Activated CD4-positive, alpha-beta memory T cell treated with anti-CD3 and anti-CD28 coated beads for 36 hours (primary cell): ENCODE measurements at regions of chr22 and their contacts with region 1.

Region 1: DNA sequence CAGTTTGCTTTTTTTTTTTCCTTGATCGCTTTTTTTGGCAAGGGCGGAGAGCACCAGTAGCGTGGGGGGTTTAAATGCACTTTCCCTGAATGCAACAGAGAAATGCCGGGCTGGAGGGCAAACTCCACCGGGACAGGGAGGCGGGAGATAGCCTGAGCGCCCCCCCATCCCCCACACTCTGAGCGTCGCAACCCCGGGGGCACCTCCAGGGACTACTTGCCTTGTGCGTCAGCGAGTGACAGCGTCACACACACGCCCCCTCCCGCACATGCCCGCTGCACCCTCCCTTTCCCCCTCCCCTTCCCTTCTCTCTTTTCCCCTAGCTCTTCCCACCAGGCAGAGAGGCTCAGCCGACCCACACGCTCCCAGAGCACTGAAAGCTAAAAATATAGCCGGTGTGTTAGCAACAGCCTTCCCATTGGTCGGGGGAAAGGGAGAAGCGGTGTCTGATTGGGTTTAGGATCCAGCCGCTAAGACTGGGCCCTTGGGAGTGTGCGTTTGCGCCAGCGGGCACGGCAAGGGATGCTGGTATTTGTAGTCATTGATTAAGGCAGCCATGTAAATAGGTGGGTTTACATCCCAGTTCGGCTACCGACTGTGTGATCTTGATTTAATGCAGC is 1.7 kb upstream of the TOB2 start:
- DNase-seq: peak; percentile 95
- H3K4me3 Mint-ChIP-seq: peak overlapping the region; percentile 94
- H3K27ac Mint-ChIP-seq: peak overlapping the region; percentile 98
- H3K4me1 Mint-ChIP-seq: peaks cover 17% of the 10 kb centered on the region
- H3K27me3 Mint-ChIP-seq: no peaks in the 10 kb centered on the region

Region 2: GRCh38 chr22:40950962-40951794 is 497.1 kb before region 1 on chr22 and contains the start of gene RBX1:
- CTCF ChIA-PET with region 1: no interaction called
- POLR2A ChIA-PET with region 1: no interaction called
- intact Hi-C with region 1: loop called (anchors 1 kb)
- DNase-seq: peak; percentile 99
- H3K4me3 Mint-ChIP-seq: peak within 1 kb of the TSS; percentile 99
- H3K27ac Mint-ChIP-seq: peak within 1 kb of the TSS; percentile 99
- H3K4me1 Mint-ChIP-seq: peaks cover 30% of the 10 kb centered on the region
- H3K27me3 Mint-ChIP-seq: no peaks in the 10 kb centered on the region
- total RNA-seq, gene RBX1: 96.9 to 99.4 TPM

Region 3: GRCh38 chr22:41285820-41286638 is 162.3 kb before region 1 on chr22 and contains the start of gene RANGAP1:
- CTCF ChIA-PET with region 1: no interaction called
- POLR2A ChIA-PET with region 1: interaction called, 11 read pairs
- intact Hi-C with region 1: loop called (anchors 1 kb)
- DNase-seq: peak; percentile 99
- H3K4me3 Mint-ChIP-seq: peak within 1 kb of the TSS; percentile 98
- H3K27ac Mint-ChIP-seq: peak within 1 kb of the TSS; percentile 99
- H3K4me1 Mint-ChIP-seq: peaks cover 25% of the 10 kb centered on the region
- H3K27me3 Mint-ChIP-seq: no peaks in the 10 kb centered on the region
- total RNA-seq, gene RANGAP1: 154 to 156 TPM

Region 4: DNA sequence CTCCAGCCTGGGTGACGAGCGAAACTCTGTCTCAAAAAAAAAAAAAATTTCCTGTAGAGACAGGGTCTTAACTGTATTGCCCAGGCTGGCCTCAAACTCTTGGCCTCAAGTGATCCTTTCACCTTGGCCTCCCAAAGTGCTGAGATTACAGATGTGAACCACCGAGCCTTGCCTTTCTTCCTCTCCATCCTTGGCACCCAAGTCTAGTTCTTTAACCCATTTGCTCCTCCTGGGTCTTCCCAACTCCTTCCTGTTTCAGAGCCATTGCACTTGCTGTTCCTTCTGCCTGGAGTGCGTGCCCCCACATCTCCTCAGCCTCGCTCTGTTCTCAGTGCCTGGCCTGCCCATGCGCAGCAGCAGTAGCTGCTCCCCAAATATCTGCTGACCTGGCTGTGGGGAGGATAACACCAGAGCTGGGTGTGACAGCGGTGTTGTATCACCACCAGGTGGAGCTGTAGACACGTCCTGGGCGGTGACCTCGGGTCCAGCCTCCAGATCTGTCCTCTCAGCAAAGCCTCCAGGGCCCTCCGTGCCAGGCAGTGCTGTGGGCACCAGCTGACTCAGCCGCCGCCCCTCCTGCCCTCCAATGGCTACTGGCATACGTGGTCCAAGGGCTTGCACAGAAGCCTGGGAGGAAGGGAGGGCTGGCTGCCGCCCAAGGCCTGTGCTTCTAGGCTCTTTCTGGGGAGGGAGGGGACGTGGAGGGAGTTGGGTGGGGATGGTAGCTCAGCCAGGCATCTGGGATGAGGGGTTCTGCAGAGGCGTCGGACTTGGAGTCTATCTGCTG is 44.6 kb before region 1 on chr22:
- CTCF ChIA-PET with region 1: interaction called, 18 read pairs
- POLR2A ChIA-PET with region 1: interaction called, 7 read pairs
- intact Hi-C with region 1: loop called (anchors 2 kb)
- DNase-seq: peak; percentile 92
- H3K4me3 Mint-ChIP-seq: no peak overlapping the region
- H3K27ac Mint-ChIP-seq: no peak overlapping the region
- H3K4me1 Mint-ChIP-seq: peaks cover 17% of the 10 kb centered on the region
- H3K27me3 Mint-ChIP-seq: no peaks in the 10 kb centered on the region

Region 5: GRCh38 chr22:41461901-41462300 is 13.6 kb after region 1 on chr22:
- CTCF ChIA-PET with region 1: no interaction called
- POLR2A ChIA-PET with region 1: interaction called, 14 read pairs
- intact Hi-C with region 1: no loop called
- DNase-seq: no peak
- H3K4me3 Mint-ChIP-seq: no peak overlapping the region
- H3K27ac Mint-ChIP-seq: no peak overlapping the region
- H3K4me1 Mint-ChIP-seq: peaks cover 8% of the 10 kb centered on the region
- H3K27me3 Mint-ChIP-seq: no peaks in the 10 kb centered on the region

Region 6: DNA sequence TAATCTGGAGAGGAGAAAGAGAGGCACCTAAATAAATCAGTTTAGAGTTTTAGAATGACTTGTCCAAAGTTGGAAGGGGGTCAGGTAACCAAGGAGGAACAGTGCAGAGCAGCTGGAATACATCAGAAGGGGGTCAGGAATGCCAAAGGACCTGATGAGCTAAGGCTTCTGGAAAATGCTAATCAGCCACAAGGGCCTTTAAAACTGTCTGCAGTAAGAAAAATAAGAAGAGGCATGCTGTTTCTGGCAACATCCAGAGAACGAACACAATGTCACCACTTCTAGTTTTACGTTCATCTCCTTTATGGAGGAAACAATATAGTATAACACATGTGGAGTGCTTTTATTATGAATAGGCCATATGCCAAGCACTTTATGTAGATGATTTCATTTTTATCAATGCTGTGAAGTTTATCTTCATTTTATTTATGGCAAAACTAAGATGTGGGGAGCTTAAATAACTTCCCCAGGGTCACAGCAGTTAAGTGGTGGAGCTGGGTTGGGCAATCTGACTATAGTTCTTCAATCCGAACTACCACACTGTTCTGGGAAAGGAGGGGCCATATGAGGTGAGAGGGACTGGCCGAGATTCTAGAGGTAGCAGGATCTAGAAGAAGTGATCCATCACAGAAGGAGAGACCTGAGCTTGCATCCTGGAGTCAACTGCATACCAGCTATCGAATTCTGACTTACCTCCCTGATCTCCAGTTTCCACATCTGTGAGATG is 43.2 kb after region 1 on chr22:
- CTCF ChIA-PET with region 1: no interaction called
- POLR2A ChIA-PET with region 1: no interaction called
- intact Hi-C with region 1: no loop called
- DNase-seq: no peak
- H3K4me3 Mint-ChIP-seq: no peak overlapping the region
- H3K27ac Mint-ChIP-seq: no peak overlapping the region
- H3K4me1 Mint-ChIP-seq: peaks cover 10% of the 10 kb centered on the region
- H3K27me3 Mint-ChIP-seq: no peaks in the 10 kb centered on the region

Region 7: DNA sequence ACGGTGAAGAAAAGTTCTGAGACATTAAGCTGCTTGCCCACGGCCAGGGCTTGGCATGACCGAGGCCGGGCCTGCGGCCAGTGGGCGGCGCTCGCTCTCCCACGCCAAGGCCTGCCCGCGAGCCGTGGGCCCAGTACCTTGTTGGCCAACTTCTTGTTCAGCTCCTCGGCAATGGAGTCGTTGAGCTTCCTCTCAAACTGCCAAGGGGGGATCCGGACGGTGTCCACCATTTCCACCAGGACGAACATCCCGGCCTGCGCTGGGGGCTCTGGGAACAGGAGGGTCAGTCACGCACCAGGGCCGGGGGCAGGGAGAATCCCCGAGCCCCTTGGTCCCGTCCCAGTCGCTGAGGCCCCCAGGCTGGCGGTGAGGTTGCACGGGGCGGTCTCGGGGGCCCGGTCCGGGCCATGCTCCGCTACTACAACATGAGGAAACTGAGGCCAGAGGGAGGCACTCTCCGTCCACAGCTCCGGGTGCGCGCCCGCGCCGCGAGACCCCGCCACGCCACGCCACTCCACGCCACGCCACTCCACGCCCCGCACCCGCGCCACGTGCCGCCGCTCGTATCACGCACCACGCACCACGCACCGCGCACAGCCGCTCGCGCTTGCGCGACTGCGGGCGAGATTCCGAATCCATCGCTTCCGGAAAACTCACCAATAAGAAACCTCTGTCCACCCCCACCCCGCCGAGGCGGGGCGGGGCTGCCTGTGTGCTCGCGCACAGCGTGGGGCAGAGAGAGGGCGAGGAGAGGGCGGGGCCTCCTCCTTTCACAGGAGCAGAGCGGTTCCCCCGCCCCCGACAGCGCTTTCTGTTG is 95.8 kb after region 1 on chr22 and contains the start of gene POLR3H:
- CTCF ChIA-PET with region 1: interaction called, 3 read pairs
- POLR2A ChIA-PET with region 1: interaction called, 5 read pairs
- intact Hi-C with region 1: loop called (anchors 1 kb)
- DNase-seq: peak; percentile 98
- H3K4me3 Mint-ChIP-seq: peak within 1 kb of the TSS; percentile 97
- H3K27ac Mint-ChIP-seq: peak within 1 kb of the TSS; percentile 89
- H3K4me1 Mint-ChIP-seq: peaks cover 45% of the 10 kb centered on the region
- H3K27me3 Mint-ChIP-seq: no peaks in the 10 kb centered on the region
- total RNA-seq, gene POLR3H: 23.3 to 23.8 TPM